Activated B cell treated with CpG ODN at 0.5 μM for 24 hours (primary cell): ENCODE measurements at regions of chr1 and their contacts with region 1.

Region 1: DNA sequence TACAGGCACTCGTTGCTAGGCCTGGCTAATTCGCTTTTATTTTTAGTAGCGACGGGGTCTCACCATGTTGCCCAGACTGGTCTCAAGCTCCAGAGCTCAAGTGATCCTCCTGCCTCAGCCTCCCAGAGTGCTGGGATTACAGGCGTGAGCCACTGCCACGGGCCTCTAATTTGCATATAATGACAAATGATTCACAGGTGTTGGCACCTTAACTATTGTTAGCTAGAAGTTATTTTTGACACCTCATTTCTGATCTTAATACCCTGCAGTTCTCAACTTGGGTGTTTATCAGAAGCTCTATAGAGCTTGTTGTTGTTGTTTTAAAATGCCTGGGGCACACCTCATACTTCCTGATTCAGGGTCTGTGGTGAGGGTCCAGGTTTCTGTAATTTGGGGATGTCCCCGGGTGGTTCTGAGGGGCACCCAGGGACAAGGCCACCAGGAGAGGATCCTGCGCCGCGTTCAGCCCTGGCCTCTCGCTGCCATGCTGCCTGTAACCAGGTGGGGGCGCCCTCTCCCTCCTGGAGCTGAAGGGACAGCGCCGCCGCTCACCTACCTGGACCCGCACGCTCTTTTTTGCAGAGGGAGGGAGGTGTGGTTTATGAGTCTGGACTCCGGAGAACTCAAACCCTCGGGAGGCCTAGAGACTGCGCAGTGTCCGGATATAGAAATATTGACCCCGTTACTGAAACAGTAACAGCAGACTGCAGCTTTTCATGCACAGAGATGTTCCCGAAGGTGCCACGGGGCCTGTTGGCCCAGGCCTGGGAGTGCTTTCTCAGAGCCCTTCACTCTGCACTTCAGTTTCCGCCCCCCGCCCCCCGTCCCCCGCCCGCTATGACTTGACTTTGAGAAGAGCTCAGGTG is 23.0 kb upstream of the NEK2 start:
- DNase-seq: peak; percentile 59
- ATAC-seq: peak; percentile 40
- H3K4me3 Mint-ChIP-seq: peak overlapping the region; percentile 68
- H3K27ac Mint-ChIP-seq: no peak overlapping the region
- H3K4me1 Mint-ChIP-seq: peaks cover 57% of the 10 kb centered on the region
- H3K27me3 Mint-ChIP-seq: peaks cover 3% of the 10 kb centered on the region
- CTCF ChIP-seq: peak; percentile 22

Region 2: GRCh38 chr1:211741799-211742198 is 43.4 kb after region 1 on chr1:
- CTCF ChIA-PET with region 1: no interaction called
- POLR2A ChIA-PET with region 1: no interaction called
- intact Hi-C with region 1: no loop called
- DNase-seq: no peak
- ATAC-seq: no peak
- H3K4me3 Mint-ChIP-seq: no peak overlapping the region
- H3K27ac Mint-ChIP-seq: no peak overlapping the region
- H3K4me1 Mint-ChIP-seq: peaks cover 18% of the 10 kb centered on the region
- H3K27me3 Mint-ChIP-seq: no peaks in the 10 kb centered on the region
- CTCF ChIP-seq: no peak

Region 3: DNA sequence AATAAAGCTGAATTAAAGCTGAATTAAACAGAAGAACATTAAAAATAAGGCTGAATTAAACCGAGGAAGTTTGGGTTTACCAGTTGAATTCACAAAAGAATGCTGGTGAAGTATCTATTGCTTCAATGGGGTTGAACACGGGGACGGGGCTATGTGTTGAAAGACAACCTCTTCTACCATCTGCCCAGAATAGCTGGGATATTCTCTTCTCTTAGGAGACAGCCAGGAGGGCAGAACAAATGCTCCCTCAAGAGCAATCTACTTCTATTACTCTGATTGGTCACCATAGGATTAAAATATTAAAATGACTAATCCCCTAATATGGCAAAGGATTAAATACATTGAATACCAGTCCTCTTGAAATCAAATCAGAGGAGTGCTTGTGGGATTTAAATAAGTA is 63.8 kb after region 1 on chr1:
- CTCF ChIA-PET with region 1: no interaction called
- POLR2A ChIA-PET with region 1: no interaction called
- intact Hi-C with region 1: no loop called
- DNase-seq: no peak
- ATAC-seq: no peak
- H3K4me3 Mint-ChIP-seq: no peak overlapping the region
- H3K27ac Mint-ChIP-seq: no peak overlapping the region
- H3K4me1 Mint-ChIP-seq: no peaks in the 10 kb centered on the region
- H3K27me3 Mint-ChIP-seq: no peaks in the 10 kb centered on the region
- CTCF ChIP-seq: no peak

Region 4: DNA sequence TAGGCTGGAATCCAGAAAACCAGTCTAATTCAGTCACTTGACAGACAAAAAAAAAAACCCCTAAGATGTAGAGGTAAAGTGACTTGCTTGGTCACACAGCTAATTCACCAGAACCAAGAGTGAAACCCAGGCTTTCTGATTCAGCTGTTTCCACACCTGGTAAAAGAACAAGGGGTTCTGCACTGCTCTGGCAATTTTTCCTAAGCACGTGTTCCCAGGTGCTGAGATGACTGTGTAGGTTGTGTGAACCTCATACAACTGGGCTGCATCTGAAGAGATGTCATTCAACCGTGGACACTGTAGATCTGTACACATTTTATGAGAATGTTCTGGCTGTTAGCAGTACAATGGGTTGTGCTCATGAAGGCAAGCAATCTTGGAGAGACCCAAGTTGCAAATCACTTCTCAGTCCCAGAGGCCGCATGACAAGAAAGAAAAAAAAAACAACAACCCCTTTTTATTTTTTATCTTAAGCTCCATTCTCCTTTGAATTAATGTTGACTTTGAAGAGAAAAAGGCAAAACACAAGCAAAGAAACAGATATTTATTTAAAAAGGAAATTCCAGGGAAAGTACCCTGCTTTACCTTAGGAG is 241.6 kb after region 1 on chr1:
- CTCF ChIA-PET with region 1: interaction called, 4 read pairs
- POLR2A ChIA-PET with region 1: interaction called, 5 read pairs
- intact Hi-C with region 1: loop called (anchors 2 kb)
- DNase-seq: no peak
- ATAC-seq: peak; percentile 55
- H3K4me3 Mint-ChIP-seq: peak overlapping the region; percentile 11
- H3K27ac Mint-ChIP-seq: peak overlapping the region; percentile 56
- H3K4me1 Mint-ChIP-seq: peaks cover 43% of the 10 kb centered on the region
- H3K27me3 Mint-ChIP-seq: no peaks in the 10 kb centered on the region
- CTCF ChIP-seq: no peak